ENCODE measurements at regions of chr11 and their contacts with region 1.

Region 1: GRCh38 chr11:118046051-118046963 is 30.6 kb upstream of the TMPRSS4 start:
- DNase-seq: peak; percentile 18 to 88 (median 59)
- ATAC-seq: peak; percentile 83
- H3K4me3 ChIP-seq: no peak overlapping the region
- H3K4me3 Mint-ChIP-seq: peak overlapping the region; percentile 38
- H3K27ac ChIP-seq: peak overlapping the region; percentile 40 to 82
- H3K27ac Mint-ChIP-seq: peak overlapping the region; percentile 94
- H3K4me1 ChIP-seq: peaks cover 91% of the 10 kb centered on the region
- H3K4me1 Mint-ChIP-seq: peaks cover 83% of the 10 kb centered on the region
- H3K27me3 ChIP-seq: no peaks in the 10 kb centered on the region
- H3K27me3 Mint-ChIP-seq: no peaks in the 10 kb centered on the region
- CTCF ChIP-seq: no peak

Region 2: GRCh38 chr11:116980136-116980793 is 1066.0 kb before region 1 on chr11:
- CTCF ChIA-PET with region 1: no interaction called
- POLR2A ChIA-PET with region 1: no interaction called
- intact Hi-C with region 1: no loop called
- DNase-seq: peak in 2 of 9 experiments; percentile 40 to 73
- ATAC-seq: peak; percentile 79
- H3K4me3 ChIP-seq: peak overlapping the region; percentile 6 to 24
- H3K4me3 Mint-ChIP-seq: peak overlapping the region; percentile 82
- H3K27ac ChIP-seq: peak overlapping the region; percentile 50 to 64
- H3K27ac Mint-ChIP-seq: peak overlapping the region; percentile 82
- H3K4me1 ChIP-seq: peaks cover 25% of the 10 kb centered on the region
- H3K4me1 Mint-ChIP-seq: peaks cover 61% of the 10 kb centered on the region
- H3K27me3 ChIP-seq: no peaks in the 10 kb centered on the region
- H3K27me3 Mint-ChIP-seq: no peaks in the 10 kb centered on the region
- CTCF ChIP-seq: no peak

Region 3: GRCh38 chr11:117900121-117900648 is 146.1 kb before region 1 on chr11:
- CTCF ChIA-PET with region 1: no interaction called
- POLR2A ChIA-PET with region 1: no interaction called
- intact Hi-C with region 1: no loop called
- DNase-seq: no peak
- ATAC-seq: no peak
- H3K4me3 ChIP-seq: no peak overlapping the region
- H3K4me3 Mint-ChIP-seq: no peak overlapping the region
- H3K27ac ChIP-seq: no peak overlapping the region
- H3K27ac Mint-ChIP-seq: no peak overlapping the region
- H3K4me1 ChIP-seq: no peaks in the 10 kb centered on the region
- H3K4me1 Mint-ChIP-seq: peaks cover 5% of the 10 kb centered on the region
- H3K27me3 ChIP-seq: no peaks in the 10 kb centered on the region
- H3K27me3 Mint-ChIP-seq: peaks cover 5% of the 10 kb centered on the region
- CTCF ChIP-seq: no peak

Region 4: DNA sequence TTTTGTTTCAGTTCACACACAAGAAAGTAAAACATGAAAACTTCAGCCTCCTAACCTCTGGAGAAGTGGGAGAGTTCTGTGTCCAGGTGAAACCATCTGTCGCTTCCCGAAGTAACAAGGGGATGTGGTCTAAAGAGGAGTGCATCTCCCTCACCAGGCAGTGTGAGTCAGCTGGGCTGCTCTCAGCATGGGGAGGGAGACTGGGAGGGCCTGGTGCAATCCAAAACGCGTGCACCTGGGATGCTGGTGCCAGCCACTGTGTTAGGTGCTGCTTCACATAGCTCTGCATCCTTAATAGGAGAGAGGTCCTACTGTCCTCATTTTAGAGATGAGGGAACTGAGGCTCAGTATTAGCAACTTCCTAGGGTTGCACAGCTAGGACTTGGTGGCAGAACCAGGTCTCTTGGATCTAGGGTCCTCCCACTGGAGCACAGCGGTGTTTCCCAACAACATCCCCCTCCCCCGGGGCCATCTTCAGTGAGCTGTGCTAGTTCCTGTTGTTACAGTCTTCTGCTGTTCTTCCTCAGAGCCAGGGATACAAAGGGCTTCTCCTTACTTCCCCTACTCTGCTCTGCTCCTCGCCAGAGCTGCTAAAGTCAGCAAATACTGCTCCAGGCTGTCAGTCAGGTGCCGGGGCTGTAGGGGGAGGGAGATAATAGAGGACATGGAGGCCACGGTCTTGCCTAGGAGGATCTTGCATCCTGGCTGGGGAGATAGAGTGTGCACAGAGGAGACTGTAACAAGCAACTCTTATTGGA is 52.1 kb before region 1 on chr11:
- CTCF ChIA-PET with region 1: interaction called, 270 read pairs
- POLR2A ChIA-PET with region 1: interaction called, 176 read pairs
- intact Hi-C with region 1: no loop called
- DNase-seq: no peak
- ATAC-seq: peak; percentile 12
- H3K4me3 ChIP-seq: no peak overlapping the region
- H3K4me3 Mint-ChIP-seq: peak overlapping the region; percentile 85
- H3K27ac ChIP-seq: peak overlapping the region in 1 of 2 experiments; percentile 52
- H3K27ac Mint-ChIP-seq: peak overlapping the region; percentile 76
- H3K4me1 ChIP-seq: peaks cover 76% of the 10 kb centered on the region
- H3K4me1 Mint-ChIP-seq: peaks cover 90% of the 10 kb centered on the region
- H3K27me3 ChIP-seq: no peaks in the 10 kb centered on the region
- H3K27me3 Mint-ChIP-seq: no peaks in the 10 kb centered on the region
- CTCF ChIP-seq: no peak

Region 5: GRCh38 chr11:118021146-118021545 is 25.2 kb before region 1 on chr11:
- CTCF ChIA-PET with region 1: interaction called, 27 read pairs
- POLR2A ChIA-PET with region 1: interaction called, 16 read pairs
- intact Hi-C with region 1: loop called in 1 of 2 experiments (anchors 2 kb)
- DNase-seq: no peak
- ATAC-seq: no peak
- H3K4me3 ChIP-seq: no peak overlapping the region
- H3K4me3 Mint-ChIP-seq: no peak overlapping the region
- H3K27ac ChIP-seq: no peak overlapping the region
- H3K27ac Mint-ChIP-seq: no peak overlapping the region
- H3K4me1 ChIP-seq: peaks cover 13% of the 10 kb centered on the region
- H3K4me1 Mint-ChIP-seq: peaks cover 32% of the 10 kb centered on the region
- H3K27me3 ChIP-seq: no peaks in the 10 kb centered on the region
- H3K27me3 Mint-ChIP-seq: no peaks in the 10 kb centered on the region
- CTCF ChIP-seq: no peak